K562 (cell line): ENCODE measurements at regions of chr16 and their contacts with region 1.

Region 1: GRCh38 chr16:67521095-67521804 is 7.4 kb upstream of the RIPOR1 start:
- DNase-seq: peak; percentile 91 to 97 (median 92)
- ATAC-seq: peak; percentile 97
- H3K4me3 ChIP-seq: peak overlapping the region; percentile 45
- H3K27ac ChIP-seq: peak overlapping the region; percentile 76
- H3K4me1 ChIP-seq: peaks cover 7 to 21% of the 10 kb centered on the region in 2 experiments
- H3K27me3 ChIP-seq: no peaks in the 10 kb centered on the region
- CTCF ChIP-seq: peak; percentile 97 to 100 (median 100)
- EP300 ChIP-seq: peak; percentile 65
- POLR2A ChIP-seq: no peak
- RAD21 ChIP-seq: peak; percentile 90 to 95

Region 2: GRCh38 chr16:67490335-67491096 is 30.7 kb before region 1 on chr16:
- CTCF ChIA-PET with region 1: interaction called, 53 read pairs
- POLR2A ChIA-PET with region 1: interaction called, 4 read pairs
- in situ Hi-C with region 1: no loop called
- intact Hi-C with region 1: no loop called
- DNase-seq: no peak
- ATAC-seq: no peak
- H3K4me3 ChIP-seq: no peak overlapping the region
- H3K27ac ChIP-seq: no peak overlapping the region
- H3K4me1 ChIP-seq: peaks cover 0 to 3% of the 10 kb centered on the region in 2 experiments; a peak in 2 of 5 replicates
- H3K27me3 ChIP-seq: no peaks in the 10 kb centered on the region
- CTCF ChIP-seq: no peak
- EP300 ChIP-seq: no peak
- POLR2A ChIP-seq: no peak
- RAD21 ChIP-seq: no peak

Region 3: DNA sequence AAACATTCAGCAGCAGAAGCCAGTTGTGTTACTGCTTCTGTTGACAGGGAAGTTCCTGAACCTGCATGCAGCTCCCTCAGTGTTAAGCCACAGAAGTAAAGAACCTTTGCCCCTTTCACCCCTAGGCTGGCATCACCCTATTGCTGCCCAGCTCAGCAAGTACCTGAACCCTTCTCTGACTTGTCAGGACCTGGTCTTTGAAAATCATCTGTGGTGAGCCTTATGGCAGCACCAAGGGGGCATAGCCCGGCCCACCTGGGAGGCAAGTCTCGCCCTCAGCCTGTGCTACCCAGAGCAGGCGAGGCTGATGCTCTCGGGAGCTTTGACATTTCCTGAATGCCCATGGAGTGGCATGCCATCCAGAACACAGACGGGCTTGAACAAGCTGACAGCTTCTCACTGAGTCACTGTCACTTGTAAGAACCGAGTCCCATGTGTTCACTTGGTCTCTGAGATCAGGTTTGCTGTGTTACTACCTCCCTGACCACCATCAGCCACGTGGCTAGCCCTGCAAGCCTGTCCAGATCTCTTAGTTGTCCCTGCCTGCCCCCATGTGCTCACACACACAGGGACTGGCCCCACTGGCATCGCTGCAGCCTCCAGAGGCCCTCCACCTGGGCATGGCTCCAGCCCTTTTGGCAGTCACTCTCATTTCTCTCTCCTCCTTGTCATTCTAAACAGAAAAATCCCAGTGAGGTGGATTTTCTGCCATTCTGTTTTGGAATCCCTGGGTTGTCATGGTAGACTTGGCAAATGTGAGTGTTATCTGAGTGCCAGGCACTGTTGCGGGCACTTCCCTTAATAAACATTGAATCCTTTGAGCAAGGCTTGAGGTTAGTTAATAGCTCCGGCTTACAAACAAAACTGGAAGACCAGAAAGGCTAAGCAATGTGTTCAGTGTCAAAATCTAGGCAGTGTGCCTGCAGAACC is 120.8 kb after region 1 on chr16:
- CTCF ChIA-PET with region 1: interaction called, 50 read pairs
- POLR2A ChIA-PET with region 1: interaction called, 6 read pairs
- in situ Hi-C with region 1: no loop called
- intact Hi-C with region 1: loop called (anchors 1 kb)
- DNase-seq: no peak
- ATAC-seq: no peak; the same call in 2 of the 3 replicates
- H3K4me3 ChIP-seq: no peak overlapping the region
- H3K27ac ChIP-seq: no peak overlapping the region
- H3K4me1 ChIP-seq: peaks cover 0 to 26% of the 10 kb centered on the region in 2 experiments; a peak in 2 of 5 replicates
- H3K27me3 ChIP-seq: peaks cover 0 to 5% of the 10 kb centered on the region in 2 experiments; a peak in 1 of 5 replicates
- CTCF ChIP-seq: 0 out of 6 replicates have a peak, but pooled peaks of 1 of the 3 experiments have one; percentile 12
- EP300 ChIP-seq: no peak
- POLR2A ChIP-seq: no peak
- RAD21 ChIP-seq: 0 out of 4 replicates have a peak, but pooled peaks of 1 of the 2 experiments have one; percentile 6

Region 4: DNA sequence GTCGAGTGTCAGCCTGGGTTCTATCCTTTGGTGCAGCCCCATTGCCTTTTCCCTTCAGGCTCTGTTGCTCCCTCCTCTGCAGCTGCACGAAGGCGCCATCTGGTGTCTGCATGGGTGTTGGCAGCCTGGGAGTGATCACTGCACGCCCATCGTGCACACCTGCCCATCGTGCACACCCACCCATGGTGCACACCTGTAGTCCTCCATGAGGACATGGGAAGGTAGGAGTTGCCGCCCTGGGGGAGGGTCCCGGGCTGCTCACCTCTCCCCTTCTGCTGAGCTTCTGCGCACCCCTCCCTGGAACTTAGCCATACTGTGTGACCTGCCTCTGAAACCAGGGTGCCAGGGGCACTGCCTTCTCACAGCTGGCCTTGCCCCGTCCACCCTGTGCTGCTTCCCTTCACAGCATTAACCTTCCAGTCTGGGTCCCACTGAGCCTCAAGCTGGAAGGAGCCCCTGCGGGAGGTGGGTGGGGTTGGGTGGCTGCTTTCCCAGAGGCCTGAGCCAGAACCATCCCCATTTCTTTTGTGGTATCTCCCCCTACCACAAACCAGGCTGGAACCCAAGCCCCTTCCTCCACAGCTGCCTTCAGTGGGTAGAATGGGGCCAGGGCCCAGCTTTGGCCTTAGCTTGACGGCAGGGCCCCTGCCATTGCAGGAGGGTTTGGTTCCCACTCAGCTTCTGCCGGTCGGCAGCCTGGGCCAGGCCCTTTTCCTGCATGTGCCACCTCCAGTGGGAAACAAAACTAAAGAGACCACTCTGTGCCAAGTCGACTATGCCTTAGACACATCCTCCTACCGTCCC is 407.5 kb after region 1 on chr16:
- CTCF ChIA-PET with region 1: interaction called, 8 read pairs
- POLR2A ChIA-PET with region 1: no interaction called
- in situ Hi-C with region 1: loop called (anchors 10 kb)
- intact Hi-C with region 1: loop called (anchors 10 kb)
- DNase-seq: peak; percentile 75 to 81 (median 79)
- ATAC-seq: peak; percentile 93
- H3K4me3 ChIP-seq: no peak overlapping the region
- H3K27ac ChIP-seq: no peak overlapping the region
- H3K4me1 ChIP-seq: peaks cover 1 to 33% of the 10 kb centered on the region in 2 experiments; a peak in 3 of 5 replicates
- H3K27me3 ChIP-seq: no peaks in the 10 kb centered on the region
- CTCF ChIP-seq: peak; percentile 95 to 97 (median 96)
- EP300 ChIP-seq: no peak
- POLR2A ChIP-seq: no peak
- RAD21 ChIP-seq: peak; percentile 87 to 95

Region 5: DNA sequence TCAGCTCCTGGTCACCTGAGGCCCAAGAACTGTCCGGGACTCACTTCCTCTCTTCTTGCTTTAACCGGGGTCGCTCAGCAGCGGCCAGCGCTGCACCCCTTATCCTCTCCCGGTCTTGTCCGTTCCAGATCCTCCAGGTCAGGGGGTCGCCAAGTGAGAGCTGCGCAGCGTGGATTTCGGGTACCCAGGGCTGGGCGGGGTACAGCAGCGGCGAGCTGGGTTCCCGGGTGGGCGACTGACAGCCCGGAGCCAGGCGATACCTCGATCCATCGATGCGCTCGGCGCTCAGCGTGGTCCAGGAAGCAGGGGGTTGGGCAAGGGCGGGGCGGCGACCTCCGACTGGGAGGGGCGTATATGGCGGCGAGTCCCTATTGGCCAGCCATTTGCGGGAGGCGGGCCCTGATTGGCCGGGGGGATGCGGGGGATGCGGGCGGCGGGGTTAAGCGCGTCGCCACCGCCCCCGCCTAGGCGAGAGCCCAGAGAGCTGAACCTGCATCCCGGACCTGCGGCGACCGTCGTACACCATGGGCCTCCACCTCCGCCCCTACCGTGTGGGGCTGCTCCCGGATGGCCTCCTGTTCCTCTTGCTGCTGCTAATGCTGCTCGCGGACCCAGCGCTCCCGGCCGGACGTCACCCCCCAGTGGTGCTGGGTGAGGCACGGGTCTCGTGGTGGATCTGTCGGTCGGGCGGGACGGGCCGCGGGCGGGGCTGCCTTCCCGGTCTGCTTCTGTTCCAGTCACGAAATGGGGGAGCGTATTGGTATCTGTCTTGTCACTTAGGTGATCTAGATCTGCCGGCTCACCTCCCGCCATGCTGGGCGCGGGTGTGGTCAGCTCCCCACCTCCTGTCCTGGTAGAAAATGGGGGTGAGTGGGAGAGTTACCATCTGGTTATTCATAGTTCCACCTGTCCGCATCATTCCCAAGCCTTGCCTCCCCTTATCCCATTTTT is 723.9 kb after region 1 on chr16 and contains the start of gene PLA2G15:
- CTCF ChIA-PET with region 1: no interaction called
- POLR2A ChIA-PET with region 1: no interaction called
- in situ Hi-C with region 1: loop called (anchors 10 kb)
- intact Hi-C with region 1: no loop called
- DNase-seq: peak; percentile 96 to 100 (median 100)
- ATAC-seq: peak; percentile 96
- H3K4me3 ChIP-seq: peak within 1 kb of the TSS; percentile 88
- H3K27ac ChIP-seq: peak within 1 kb of the TSS; percentile 44
- H3K4me1 ChIP-seq: peaks cover 26 to 35% of the 10 kb centered on the region in 2 experiments
- H3K27me3 ChIP-seq: no peaks in the 10 kb centered on the region
- CTCF ChIP-seq: peak in 1 of 3 experiments; percentile 2; a peak in 1 of 6 replicates
- EP300 ChIP-seq: no peak
- POLR2A ChIP-seq: peak; percentile 65
- RAD21 ChIP-seq: no peak
- polyA plus RNA-seq, gene PLA2G15: 0.42 to 1.1 TPM